Psoas muscle (tissue), 8 donors: ENCODE measurements at regions of chr4 and their contacts with region 1.

Region 1: GRCh38 chr4:119785963-119786362 is 157.4 kb upstream of the PDE5A start:
- DNase-seq: no peak
- ATAC-seq: peak in 1 of 4 donors; percentile 60
- H3K4me3 ChIP-seq: no peak overlapping the region
- H3K27ac ChIP-seq: no peak overlapping the region
- H3K4me1 ChIP-seq: no peaks in the 10 kb centered on the region
- H3K27me3 ChIP-seq: no peaks in the 10 kb centered on the region
- CTCF ChIP-seq: peak; percentile 55

Region 2: DNA sequence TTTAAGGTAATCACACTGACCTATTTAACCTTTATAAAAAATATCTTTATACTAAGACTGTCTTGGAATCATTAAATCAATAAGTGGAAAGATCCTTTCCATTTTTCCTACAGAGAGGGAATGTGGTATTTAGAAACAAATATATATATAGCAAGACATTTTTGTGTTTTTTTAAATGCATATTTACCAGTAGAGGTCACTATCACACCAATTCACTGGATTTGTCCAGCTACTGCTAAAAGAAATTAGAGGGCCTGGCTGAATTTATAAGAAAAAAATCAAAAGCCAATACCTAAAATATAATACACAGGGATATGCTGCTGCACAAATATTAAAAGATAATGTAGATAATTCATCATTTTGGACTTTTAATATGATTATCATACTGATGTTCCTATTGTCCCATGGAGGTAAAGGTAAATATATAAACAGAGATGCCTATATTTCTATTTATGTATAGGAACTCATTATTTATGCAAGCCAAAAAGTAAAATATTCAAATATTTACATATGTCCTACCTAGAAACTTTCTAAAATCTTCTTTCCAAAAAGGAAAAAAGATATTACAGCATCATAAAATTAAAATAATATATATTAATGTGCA is 226.8 kb before region 1 on chr4:
- intact Hi-C with region 1: loop called in 1 of 2 experiments (anchors 5 kb)
- DNase-seq: no peak
- ATAC-seq: peak in 1 of 4 donors; percentile 76
- H3K4me3 ChIP-seq: no peak overlapping the region
- H3K27ac ChIP-seq: no peak overlapping the region
- H3K4me1 ChIP-seq: no peaks in the 10 kb centered on the region
- H3K27me3 ChIP-seq: no peaks in the 10 kb centered on the region
- CTCF ChIP-seq: peak; percentile 57

Region 3: DNA sequence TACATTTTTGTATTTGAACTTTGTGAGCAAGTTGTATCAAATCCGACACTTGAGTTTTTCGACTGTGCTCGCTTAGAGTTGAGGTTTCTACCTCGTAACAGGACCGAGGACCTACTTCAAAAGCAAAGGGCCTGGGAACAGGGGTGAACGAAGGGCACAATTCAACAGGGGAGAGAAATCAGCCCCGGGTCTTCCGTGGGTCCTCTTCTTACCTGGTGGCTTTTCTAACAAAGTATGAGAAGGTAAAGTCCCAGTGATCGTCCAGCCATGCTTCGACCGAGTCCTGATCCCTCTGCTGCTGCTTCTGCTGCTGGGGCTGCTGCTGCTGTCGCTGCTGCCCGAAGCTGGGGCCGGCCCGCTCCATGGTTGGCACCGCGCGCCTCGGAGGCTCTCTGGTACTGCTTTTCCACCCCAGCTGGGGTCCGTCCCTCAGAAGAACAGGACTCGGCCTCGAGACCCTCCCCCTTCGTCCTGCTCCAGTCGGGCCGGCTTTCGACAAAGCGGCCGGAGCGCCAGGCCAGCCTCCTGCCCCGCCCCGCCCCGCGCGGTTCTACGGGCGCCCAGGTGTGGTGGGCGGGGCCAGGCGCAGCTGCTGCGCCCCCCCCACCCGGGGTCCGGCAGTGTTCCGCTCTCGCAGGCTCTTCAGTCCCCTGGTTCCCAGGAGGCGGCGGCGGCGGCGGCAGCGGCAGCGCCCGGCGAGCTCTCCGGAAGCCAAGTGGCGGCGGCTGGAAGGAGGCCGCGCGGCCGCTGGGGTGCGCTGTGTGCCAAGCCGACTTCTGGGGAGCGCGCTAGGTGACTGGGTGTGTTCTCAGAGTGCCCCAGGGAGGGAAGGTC is 157.4 kb before region 1 on chr4 and contains the start of gene PDE5A:
- intact Hi-C with region 1: loop called (anchors 2 kb)
- DNase-seq: peak; percentile 78 to 90
- ATAC-seq: peak; percentile 88 to 91 (median 91)
- H3K4me3 ChIP-seq: peak within 1 kb of the TSS; percentile 92
- H3K27ac ChIP-seq: peak within 1 kb of the TSS; percentile 85
- H3K4me1 ChIP-seq: peaks cover 5% of the 10 kb centered on the region
- H3K27me3 ChIP-seq: no peaks in the 10 kb centered on the region
- CTCF ChIP-seq: peak; percentile 79
- total RNA-seq, gene PDE5A: 4.4 to 21.1 (median 7.4) TPM

Region 4: DNA sequence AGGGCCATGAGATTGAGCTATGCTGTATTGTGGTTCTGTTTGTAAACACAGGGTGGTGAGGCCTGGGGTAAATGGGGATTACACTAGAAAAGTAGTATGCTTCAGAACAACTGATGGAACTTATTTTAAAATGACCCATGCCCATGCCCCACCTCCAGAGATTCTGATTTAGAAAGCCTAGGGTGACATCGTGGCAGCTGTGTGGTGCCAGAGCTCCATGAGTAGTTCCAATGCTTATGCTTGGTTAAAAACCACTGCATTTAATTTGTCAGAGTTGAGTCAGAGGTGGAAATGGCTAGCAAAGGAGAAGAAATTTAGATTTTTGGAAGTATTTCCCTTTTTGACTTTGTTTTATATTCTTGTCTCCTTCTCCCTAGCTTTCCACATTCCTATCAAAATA is 94.0 kb before region 1 on chr4:
- intact Hi-C with region 1: loop called in 1 of 2 experiments (anchors 10 kb)
- DNase-seq: no peak
- ATAC-seq: peak in 1 of 4 donors; percentile 50
- H3K4me3 ChIP-seq: no peak overlapping the region
- H3K27ac ChIP-seq: no peak overlapping the region
- H3K4me1 ChIP-seq: no peaks in the 10 kb centered on the region
- H3K27me3 ChIP-seq: no peaks in the 10 kb centered on the region
- CTCF ChIP-seq: peak; percentile 40